Thyroid gland (tissue), 4 donors: ENCODE measurements at regions of chr14 and their contacts with region 1.

Region 1: GRCh38 chr14:36553656-36554260 is 28.7 kb downstream of the NKX2-8 start:
- DNase-seq: peak; percentile 24 to 42
- H3K4me3 ChIP-seq: no peak overlapping the region
- H3K27ac ChIP-seq: no peak overlapping the region
- H3K4me1 ChIP-seq: no peaks in the 10 kb centered on the region
- H3K27me3 ChIP-seq: no peaks in the 10 kb centered on the region
- CTCF ChIP-seq: peak; percentile 33 to 79 (median 60)
- POLR2A ChIP-seq: no peak

Region 2: DNA sequence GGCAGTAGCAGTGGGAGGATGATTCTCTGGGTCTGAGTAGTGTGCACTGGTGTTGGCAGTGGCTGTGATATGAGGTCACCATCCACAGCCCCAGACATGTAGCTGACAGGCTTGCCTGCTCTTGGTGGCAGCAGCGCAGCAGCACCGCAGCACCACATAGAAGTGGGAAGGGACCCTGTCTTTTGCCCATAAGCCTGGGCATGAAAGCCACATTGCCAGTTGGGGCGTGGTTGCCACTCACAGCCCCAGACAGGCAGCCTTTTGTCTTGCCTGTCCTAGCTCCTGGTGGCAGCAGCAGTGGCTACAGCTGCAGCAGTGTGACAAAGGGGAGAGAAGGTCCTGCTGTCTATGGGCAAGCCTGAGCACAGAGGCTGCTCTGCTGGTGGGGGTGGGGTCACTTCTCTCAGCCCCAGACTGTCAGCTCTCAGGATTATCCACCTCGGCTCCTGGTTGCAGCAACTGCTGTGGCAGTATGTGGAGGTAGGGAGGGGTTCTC is 656.1 kb before region 1 on chr14:
- intact Hi-C with region 1: loop called (anchors 10 kb)
- DNase-seq: no peak
- H3K4me3 ChIP-seq: no peak overlapping the region
- H3K27ac ChIP-seq: no peak overlapping the region
- H3K4me1 ChIP-seq: no peaks in the 10 kb centered on the region
- H3K27me3 ChIP-seq: no peaks in the 10 kb centered on the region
- CTCF ChIP-seq: no peak
- POLR2A ChIP-seq: no peak

Region 3: GRCh38 chr14:36070031-36070719 is 483.6 kb before region 1 on chr14:
- intact Hi-C with region 1: loop called (anchors 10 kb)
- DNase-seq: peak; percentile 90 to 93
- H3K4me3 ChIP-seq: no peak overlapping the region
- H3K27ac ChIP-seq: peak overlapping the region; percentile 62 to 89 (median 67)
- H3K4me1 ChIP-seq: peaks cover 27 to 33% of the 10 kb centered on the region in 2 donors
- H3K27me3 ChIP-seq: no peaks in the 10 kb centered on the region
- CTCF ChIP-seq: peak; percentile 29 to 91 (median 80)
- POLR2A ChIP-seq: no peak

Region 4: GRCh38 chr14:36604757-36605505 is 51.2 kb after region 1 on chr14:
- intact Hi-C with region 1: loop called (anchors 10 kb)
- DNase-seq: peak; percentile 69 to 70
- H3K4me3 ChIP-seq: no peak overlapping the region
- H3K27ac ChIP-seq: peak overlapping the region; percentile 3 to 34 (median 32)
- H3K4me1 ChIP-seq: no peaks in the 10 kb centered on the region
- H3K27me3 ChIP-seq: no peaks in the 10 kb centered on the region
- CTCF ChIP-seq: peak in 5 of 6 experiments; percentile 38 to 95 (median 86)
- POLR2A ChIP-seq: no peak

Region 5: GRCh38 chr14:36627981-36628380 is 74.2 kb after region 1 on chr14:
- intact Hi-C with region 1: no loop called
- DNase-seq: no peak
- H3K4me3 ChIP-seq: no peak overlapping the region
- H3K27ac ChIP-seq: no peak overlapping the region
- H3K4me1 ChIP-seq: no peaks in the 10 kb centered on the region
- H3K27me3 ChIP-seq: no peaks in the 10 kb centered on the region
- CTCF ChIP-seq: no peak
- POLR2A ChIP-seq: no peak

Region 6: DNA sequence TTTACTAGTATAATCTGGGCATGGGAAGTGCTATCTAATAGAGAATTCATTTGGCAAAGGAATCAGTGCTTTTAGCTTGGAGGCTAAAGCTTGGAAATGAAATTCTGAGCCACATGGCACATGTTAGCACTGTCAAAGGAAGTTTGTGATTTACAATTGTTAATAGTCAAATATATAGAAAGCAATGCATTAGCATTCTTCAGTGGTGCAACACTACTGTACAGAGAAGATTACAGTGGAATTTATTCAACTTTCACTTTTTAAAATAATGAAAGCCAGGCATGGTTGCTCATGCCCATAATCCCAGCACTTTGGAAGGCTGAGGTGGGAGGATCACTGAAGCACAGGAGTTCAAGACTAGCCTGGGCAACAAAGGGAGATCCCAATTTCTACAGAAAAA is 153.8 kb after region 1 on chr14:
- intact Hi-C with region 1: no loop called
- DNase-seq: no peak
- H3K4me3 ChIP-seq: no peak overlapping the region
- H3K27ac ChIP-seq: no peak overlapping the region
- H3K4me1 ChIP-seq: no peaks in the 10 kb centered on the region
- H3K27me3 ChIP-seq: no peaks in the 10 kb centered on the region
- CTCF ChIP-seq: no peak
- POLR2A ChIP-seq: no peak